GM18951 (cell line): ENCODE measurements at regions of chr21 and their contacts with region 1.

Region 1: DNA sequence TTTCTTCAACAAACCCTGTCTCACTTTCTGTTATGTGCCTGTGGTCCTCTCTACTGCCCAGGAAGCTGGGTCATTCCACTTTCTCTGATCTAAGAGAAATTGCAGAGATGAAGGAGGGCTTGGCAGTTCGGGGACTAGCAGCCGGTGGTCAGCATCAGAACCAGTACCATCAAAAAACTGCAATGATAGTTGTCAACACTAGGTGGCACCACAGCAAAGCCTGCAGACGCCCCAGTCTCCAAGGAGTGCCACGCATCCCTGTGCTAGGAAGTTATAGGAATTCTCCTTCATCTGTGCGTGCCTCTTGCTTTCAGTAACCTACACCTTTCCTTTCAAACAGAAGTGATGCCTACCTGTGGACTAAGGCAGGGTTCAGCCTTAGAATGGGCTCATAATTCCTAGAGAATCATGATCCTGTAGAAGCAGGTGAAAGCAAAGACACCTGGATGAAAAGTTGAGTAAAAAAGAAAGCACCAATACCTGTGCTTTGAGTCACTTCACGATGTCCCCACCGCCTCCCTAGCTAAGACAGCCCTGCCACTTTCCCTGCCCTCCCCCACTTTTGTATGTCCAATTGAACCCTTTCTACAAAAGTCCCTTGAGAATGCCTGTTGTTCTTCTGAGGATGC is 129.2 kb downstream of the ADAMTS1 start:
- POLR2A ChIP-seq: no peak

Region 2: DNA sequence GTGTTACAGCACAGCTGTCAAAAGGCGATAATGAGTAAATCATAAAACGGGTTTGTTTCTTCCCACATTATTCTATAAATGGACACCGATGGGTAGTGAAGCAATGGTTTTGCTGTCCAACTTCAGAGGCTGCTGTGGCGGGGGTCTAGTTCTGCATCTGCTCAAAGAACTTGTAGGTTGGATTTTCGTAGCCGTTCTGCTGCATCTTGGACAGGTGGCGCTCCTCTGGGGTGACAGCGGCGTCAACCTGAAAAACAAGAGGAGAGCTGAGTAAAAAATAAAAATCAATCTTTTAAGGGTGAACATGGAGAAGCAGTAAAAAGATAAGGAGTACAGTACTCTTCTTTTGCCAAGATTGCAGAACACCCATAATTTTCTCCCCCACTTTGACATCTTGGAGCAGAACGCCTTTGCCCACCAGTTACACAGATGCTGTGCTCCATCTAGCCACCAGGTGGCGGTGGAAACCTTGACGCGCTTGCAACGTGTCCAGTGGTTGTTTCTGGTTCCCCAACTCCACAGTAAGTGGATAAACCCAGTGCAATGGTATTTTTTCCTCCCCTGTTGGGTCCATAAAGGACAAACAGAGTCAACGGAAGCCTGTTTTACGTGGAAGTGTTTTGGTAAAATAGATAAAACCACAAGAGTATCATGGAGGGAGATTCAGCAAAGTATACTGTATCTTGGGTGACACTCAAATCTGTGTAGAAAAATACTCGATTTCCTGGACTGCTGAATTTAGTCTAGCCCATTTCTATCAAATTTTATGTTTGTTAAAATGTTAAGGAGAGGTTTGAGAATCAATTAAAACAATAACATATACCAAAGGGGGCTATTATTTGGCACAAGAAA is 834.2 kb before region 1 on chr21:
- in situ Hi-C with region 1: loop called (anchors 25 kb)
- POLR2A ChIP-seq: no peak

Region 3: GRCh38 chr21:26320596-26320995 is 395.4 kb before region 1 on chr21:
- in situ Hi-C with region 1: no loop called
- POLR2A ChIP-seq: no peak

Region 4: DNA sequence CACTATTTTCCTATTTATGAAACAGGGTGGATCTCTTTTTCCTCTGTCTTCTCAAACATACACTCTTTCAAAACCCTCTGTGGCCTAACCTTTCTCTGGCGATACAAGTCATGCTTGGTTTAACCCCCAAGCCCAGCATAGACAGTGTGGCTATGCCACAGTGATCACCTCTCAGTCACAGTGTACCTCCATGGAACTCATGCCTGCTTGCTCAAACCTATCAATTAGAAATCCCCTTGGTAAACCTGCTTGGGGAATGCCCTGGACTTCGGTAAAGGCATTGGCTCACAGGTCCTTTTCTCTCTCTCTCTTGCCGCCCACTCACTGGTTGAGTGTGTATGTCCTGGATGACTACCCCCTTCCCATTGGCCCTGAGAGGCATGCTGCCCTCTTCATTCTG is 290.4 kb before region 1 on chr21:
- in situ Hi-C with region 1: no loop called
- POLR2A ChIP-seq: no peak